ENCODE measurements at regions of chr16 and their contacts with region 1.

Region 1: DNA sequence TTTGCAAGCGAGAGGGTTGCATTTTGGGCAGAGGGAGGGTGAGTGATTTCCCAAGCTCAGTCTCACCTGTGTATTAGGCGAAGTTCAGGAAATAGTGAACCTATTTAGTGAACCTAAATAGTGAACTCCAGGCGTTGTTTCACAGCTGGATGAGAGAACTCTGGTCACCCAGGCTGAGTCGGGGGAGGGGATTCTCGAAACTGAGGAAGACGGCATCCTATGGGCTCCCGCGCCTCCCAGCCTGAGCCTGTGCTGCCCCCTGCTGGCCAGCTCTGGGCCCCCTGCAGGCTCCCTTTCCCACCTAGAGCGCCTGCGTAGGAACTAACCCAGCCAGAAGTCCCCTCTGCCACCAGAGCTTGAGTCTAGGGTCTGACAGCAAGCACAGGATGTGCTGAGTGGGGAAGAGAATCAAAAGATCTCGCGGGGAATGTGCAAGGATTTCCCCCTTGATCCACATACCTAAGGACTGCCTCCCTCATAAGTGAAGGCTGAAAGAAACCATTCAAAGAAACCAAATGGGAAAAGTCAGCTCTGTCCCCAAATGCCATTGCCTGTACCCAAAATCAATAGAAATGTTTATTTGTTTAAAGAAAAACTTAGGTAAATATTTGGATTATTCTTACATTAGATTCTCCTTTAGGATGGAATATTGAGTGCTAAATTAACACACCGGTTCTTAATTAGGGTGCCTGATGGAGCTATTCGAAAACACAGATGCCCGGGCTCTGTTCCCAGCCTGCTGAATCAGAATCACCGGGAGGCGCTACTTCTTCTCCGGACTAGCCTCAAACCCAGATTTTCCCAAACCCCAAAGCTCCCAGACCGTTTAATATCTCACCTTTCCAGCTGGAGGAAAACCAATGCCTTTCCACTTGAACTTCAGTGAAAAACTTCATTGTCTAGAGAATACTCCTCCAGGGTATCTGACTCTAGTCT is 14.8 kb upstream of the MARVELD3 start:
- DNase-seq: peak; percentile 95
- H3K4me3 Mint-ChIP-seq: peak overlapping the region; percentile 24
- H3K27ac Mint-ChIP-seq: no peak overlapping the region
- H3K4me1 Mint-ChIP-seq: peaks cover 26% of the 10 kb centered on the region
- H3K27me3 Mint-ChIP-seq: no peaks in the 10 kb centered on the region
- CTCF ChIP-seq: peak; percentile 98

Region 2: GRCh38 chr16:71484006-71484893 is 127.0 kb before region 1 on chr16:
- CTCF ChIA-PET with region 1: interaction called, 5 read pairs
- intact Hi-C with region 1: loop called (anchors 5 kb)
- DNase-seq: peak; percentile 86
- H3K4me3 Mint-ChIP-seq: peak overlapping the region; percentile 81
- H3K27ac Mint-ChIP-seq: peak overlapping the region; percentile 56
- H3K4me1 Mint-ChIP-seq: peaks cover 11% of the 10 kb centered on the region
- H3K27me3 Mint-ChIP-seq: no peaks in the 10 kb centered on the region
- CTCF ChIP-seq: no peak

Region 3: DNA sequence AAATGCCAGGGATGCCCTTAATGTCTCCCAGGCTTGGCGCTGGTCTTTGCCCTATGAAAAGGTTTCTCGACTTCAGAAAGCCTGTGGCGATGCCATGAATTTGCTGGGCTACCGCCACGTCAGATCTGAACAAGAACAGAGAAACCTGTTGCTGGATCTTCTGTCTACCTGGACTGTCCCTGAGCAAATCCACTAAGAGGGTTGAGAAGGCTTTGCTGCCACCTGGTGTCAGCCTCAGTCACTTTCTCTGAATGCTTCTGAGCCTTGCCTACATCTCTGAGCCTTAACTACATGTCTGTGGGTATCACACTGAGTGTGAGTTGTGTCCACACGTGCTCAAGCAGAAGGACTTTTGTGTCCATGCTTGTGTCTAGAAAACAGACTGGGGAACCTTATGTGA is 73.6 kb before region 1 on chr16:
- CTCF ChIA-PET with region 1: interaction called, 13 read pairs
- intact Hi-C with region 1: no loop called
- DNase-seq: peak; percentile 78
- H3K4me3 Mint-ChIP-seq: no peak overlapping the region
- H3K27ac Mint-ChIP-seq: no peak overlapping the region
- H3K4me1 Mint-ChIP-seq: peaks cover 22% of the 10 kb centered on the region
- H3K27me3 Mint-ChIP-seq: no peaks in the 10 kb centered on the region
- CTCF ChIP-seq: peak; percentile 72

Region 4: DNA sequence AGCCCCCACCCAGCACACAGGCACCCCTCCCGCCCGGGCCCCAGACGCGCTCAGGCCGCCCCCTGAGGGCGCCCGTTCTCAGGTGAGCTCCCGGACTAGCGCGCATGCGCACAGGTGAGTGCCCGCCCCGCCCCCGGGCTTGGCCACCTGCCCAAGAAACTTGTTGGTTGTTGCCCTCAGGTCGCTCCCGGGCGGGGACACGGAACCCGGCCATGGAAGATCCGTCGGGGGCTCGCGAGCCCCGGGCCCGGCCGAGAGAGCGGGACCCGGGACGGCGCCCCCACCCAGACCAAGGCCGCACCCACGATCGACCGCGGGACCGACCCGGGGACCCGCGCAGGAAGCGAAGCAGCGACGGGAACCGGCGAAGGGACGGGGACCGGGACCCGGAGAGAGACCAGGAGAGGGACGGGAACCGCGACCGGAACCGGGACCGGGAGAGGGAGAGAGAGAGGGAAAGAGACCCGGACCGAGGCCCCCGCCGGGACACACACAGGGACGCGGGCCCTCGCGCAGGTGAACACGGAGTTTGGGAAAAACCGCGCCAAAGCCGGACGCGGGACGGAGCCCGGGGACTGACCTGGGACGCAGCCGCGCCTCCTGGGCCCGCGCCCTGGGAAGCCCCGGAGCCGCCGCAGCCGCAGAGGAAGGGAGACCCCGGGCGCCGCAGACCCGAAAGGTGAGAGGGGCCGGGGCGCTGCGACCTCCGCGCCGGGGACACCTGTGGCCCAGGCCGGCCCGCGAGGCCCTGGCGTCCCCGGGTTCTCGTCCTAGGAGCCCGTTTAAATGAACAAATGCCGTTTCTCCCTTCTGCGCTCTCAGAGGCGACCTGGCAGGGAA is 15.0 kb after region 1 on chr16 and contains the start of gene MARVELD3:
- CTCF ChIA-PET with region 1: interaction called, 15 read pairs
- intact Hi-C with region 1: no loop called
- DNase-seq: peak; percentile 99
- H3K4me3 Mint-ChIP-seq: no peak within 1 kb of the TSS
- H3K27ac Mint-ChIP-seq: peak within 1 kb of the TSS; percentile 56
- H3K4me1 Mint-ChIP-seq: peaks cover 19% of the 10 kb centered on the region
- H3K27me3 Mint-ChIP-seq: no peaks in the 10 kb centered on the region
- CTCF ChIP-seq: no peak
- total RNA-seq, gene MARVELD3: 38.4 and 40.1 TPM in 2 replicates

Region 5: DNA sequence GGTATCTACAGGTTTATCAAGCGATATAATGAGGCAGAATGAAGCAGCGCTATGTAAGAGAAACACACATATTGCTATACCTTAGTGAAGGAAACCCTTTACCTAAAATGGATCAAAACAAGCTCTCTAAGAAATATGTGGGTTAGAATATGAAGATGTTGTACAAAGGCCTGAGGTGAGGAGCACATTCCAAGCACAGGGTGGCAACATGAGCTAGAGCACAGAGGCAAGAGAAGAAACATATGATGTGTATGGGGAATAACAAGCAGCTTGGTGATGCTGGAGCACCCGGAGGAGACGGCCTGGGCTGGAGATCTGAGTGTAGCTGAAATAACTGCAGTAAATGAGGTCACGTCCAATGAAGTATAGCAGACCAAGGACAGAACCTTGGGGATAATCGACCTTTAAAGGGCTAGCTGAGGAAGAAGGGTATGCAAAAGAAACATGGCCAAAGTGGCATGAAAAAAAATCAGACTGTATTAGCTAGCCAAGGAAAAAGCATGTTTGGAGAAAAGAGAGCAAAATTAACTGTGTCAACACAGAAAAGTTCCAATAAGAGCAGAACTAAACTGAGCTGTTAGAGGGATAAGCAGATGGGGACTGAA is 58.8 kb after region 1 on chr16:
- CTCF ChIA-PET with region 1: no interaction called
- intact Hi-C with region 1: no loop called
- DNase-seq: no peak
- H3K4me3 Mint-ChIP-seq: no peak overlapping the region
- H3K27ac Mint-ChIP-seq: no peak overlapping the region
- H3K4me1 Mint-ChIP-seq: peaks cover 16% of the 10 kb centered on the region
- H3K27me3 Mint-ChIP-seq: no peaks in the 10 kb centered on the region
- CTCF ChIP-seq: no peak

Region 6: DNA sequence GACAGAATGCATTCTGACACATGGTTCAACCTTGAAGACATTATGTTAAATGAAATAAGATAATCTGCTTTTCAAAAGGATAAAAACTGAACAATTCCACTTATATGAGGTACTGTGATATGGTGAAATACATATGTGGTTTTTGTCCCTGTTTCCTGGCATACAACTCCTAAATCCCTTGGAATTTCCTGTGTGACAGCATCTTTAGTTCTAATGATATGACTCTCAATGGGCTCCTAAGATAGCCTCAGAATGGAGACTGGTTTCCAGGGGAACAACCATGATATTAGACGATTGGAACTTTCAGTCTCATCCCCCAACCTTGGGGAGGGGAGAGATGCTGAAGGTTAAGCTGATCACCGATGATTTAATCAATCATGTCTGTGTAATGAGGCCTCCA is 151.0 kb after region 1 on chr16:
- CTCF ChIA-PET with region 1: no interaction called
- intact Hi-C with region 1: no loop called
- DNase-seq: no peak
- H3K4me3 Mint-ChIP-seq: no peak overlapping the region
- H3K27ac Mint-ChIP-seq: no peak overlapping the region
- H3K4me1 Mint-ChIP-seq: no peaks in the 10 kb centered on the region
- H3K27me3 Mint-ChIP-seq: no peaks in the 10 kb centered on the region
- CTCF ChIP-seq: no peak

Region 7: GRCh38 chr16:72554935-72555334 is 943.7 kb after region 1 on chr16:
- CTCF ChIA-PET with region 1: no interaction called
- intact Hi-C with region 1: no loop called
- DNase-seq: no peak
- H3K4me3 Mint-ChIP-seq: no peak overlapping the region
- H3K27ac Mint-ChIP-seq: no peak overlapping the region
- H3K4me1 Mint-ChIP-seq: no peaks in the 10 kb centered on the region
- H3K27me3 Mint-ChIP-seq: no peaks in the 10 kb centered on the region
- CTCF ChIP-seq: no peak